PC-9 (cell line): ENCODE measurements at regions of chrX and their contacts with region 1.

Region 1: DNA sequence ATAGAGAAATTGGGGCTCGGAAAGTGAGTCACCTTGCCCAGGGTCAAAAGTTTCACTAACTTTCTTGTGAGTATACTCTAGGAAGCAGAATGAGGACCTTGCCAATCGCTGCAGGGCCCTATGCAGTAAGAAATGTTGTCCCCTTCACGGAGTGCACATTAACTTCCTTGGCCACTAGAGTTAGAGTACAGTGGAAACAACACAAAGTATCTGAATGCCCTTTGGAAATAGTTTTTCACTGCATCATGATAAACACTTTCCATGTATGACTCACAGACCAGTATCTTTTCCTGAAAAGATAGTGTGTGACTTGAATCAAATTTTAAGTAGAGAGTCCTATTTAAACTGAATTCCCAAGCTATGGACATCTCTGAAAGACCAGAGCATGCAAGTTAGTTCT is 45.5 kb upstream of the STK26 start:
- DNase-seq: peak; percentile 31 to 69
- H3K4me3 ChIP-seq: no peak overlapping the region
- H3K27ac ChIP-seq: no peak overlapping the region
- H3K4me1 ChIP-seq: peaks cover 35% of the 10 kb centered on the region
- H3K27me3 ChIP-seq: no peaks in the 10 kb centered on the region
- CTCF ChIP-seq: no peak

Region 2: DNA sequence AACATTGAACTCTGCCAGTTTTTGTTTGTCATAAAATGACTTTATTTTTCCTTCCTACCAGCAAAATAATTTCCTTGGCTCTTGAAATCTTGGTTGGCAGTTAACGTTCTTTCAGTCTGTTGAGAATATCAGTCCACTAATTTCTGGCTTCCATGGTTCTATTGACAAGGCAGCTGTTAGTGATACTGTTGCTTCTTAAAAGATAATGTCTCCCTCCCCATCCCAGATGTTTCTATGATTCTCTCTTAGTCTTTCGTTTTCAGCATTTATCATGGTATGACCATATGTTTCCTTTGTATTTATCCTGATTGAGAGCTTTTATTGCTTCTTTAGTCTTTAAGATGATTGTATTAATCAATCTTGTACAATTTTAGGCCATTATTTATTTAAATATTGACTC is 35.6 kb before region 1 on chrX:
- CTCF ChIA-PET with region 1: no interaction called
- POLR2A ChIA-PET with region 1: no interaction called
- intact Hi-C with region 1: no loop called
- DNase-seq: no peak
- H3K4me3 ChIP-seq: no peak overlapping the region
- H3K27ac ChIP-seq: no peak overlapping the region
- H3K4me1 ChIP-seq: peaks cover 4% of the 10 kb centered on the region; the same call in 1 of the 2 replicates
- H3K27me3 ChIP-seq: no peaks in the 10 kb centered on the region
- CTCF ChIP-seq: no peak

Region 3: GRCh38 chrX:132001127-132001526 is 23.5 kb after region 1 on chrX:
- CTCF ChIA-PET with region 1: no interaction called
- POLR2A ChIA-PET with region 1: no interaction called
- intact Hi-C with region 1: loop called (anchors 2 kb)
- DNase-seq: peak; percentile 67 to 99
- H3K4me3 ChIP-seq: no peak overlapping the region
- H3K27ac ChIP-seq: peak overlapping the region; percentile 92
- H3K4me1 ChIP-seq: peaks cover 32% of the 10 kb centered on the region
- H3K27me3 ChIP-seq: no peaks in the 10 kb centered on the region
- CTCF ChIP-seq: no peak

Region 4: GRCh38 chrX:132631579-132632232 is 654.1 kb after region 1 on chrX:
- CTCF ChIA-PET with region 1: no interaction called
- POLR2A ChIA-PET with region 1: no interaction called
- intact Hi-C with region 1: no loop called
- DNase-seq: peak; percentile 5 to 36
- H3K4me3 ChIP-seq: no peak overlapping the region
- H3K27ac ChIP-seq: no peak overlapping the region
- H3K4me1 ChIP-seq: no peaks in the 10 kb centered on the region
- H3K27me3 ChIP-seq: no peaks in the 10 kb centered on the region
- CTCF ChIP-seq: peak; percentile 76